ENCODE measurements at regions of chr19 and their contacts with region 1.

Region 1: GRCh38 chr19:46975925-46976782 is 43.5 kb upstream of the NPAS1 start:
- DNase-seq: peak; percentile 98 to 99
- ATAC-seq: peak; percentile 87 to 92 (median 88)
- H3K4me3 ChIP-seq: peak overlapping the region; percentile 30
- H3K27ac ChIP-seq: peak overlapping the region; percentile 91
- H3K4me1 ChIP-seq: peaks cover 87% of the 10 kb centered on the region
- H3K27me3 ChIP-seq: no peaks in the 10 kb centered on the region
- CTCF ChIP-seq: no peak

Region 2: DNA sequence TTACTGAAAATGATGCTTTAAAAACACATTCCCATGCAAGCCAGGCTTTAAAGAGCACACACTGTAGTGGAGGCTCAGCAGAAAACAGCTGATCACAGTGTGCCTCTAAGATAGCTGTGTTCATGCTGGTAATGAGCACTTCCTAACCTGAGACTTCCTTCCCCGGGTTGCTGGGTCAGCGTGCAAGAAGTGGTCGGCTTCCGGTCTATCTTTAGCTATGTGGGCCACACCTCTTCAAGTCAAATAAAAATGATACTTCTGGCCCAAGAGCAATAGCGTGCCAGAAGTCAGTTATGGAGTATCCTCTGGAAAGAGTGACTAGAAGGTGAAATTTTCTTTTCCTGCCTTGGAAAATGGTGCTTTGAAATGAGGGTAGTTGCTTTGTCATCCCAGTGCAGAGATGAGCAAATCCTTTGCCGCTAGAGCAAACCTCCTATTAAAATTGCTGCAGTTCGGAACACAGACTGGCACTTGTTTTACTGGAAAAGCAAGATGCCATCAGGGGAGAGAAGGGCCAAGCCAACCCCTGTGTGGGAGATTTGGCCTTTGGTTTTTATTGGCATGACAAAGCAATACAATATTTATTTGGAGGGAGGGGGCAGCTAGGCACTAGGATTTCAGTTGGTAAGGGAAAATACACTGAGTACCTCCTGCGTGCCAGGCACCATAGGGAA is 51.1 kb before region 1 on chr19:
- intact Hi-C with region 1: loop called (anchors 5 kb)
- DNase-seq: no peak
- ATAC-seq: peak in 3 of 4 donors; percentile 53 to 74 (median 73)
- H3K4me3 ChIP-seq: no peak overlapping the region
- H3K27ac ChIP-seq: peak overlapping the region; percentile 75
- H3K4me1 ChIP-seq: peaks cover 69% of the 10 kb centered on the region
- H3K27me3 ChIP-seq: no peaks in the 10 kb centered on the region
- CTCF ChIP-seq: no peak

Region 3: DNA sequence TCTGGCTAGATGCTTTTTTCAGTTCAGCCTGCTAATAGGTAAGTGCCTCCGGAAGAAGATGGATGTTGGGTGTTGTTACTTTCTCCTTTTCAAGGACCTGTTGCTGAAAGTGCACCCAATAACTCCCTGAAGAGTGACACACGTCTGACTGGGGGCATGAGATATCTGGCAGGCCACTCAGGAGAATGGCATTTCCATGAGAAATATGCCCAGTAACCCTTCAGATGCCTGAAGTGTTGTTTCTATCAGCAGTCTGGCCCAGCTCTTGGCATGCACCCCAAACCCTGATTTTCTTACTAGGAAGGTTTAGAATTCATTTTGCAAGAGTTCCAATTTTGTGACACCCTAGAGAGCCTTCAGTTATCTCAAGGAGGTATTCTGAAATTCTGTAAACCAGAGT is 43.8 kb before region 1 on chr19:
- intact Hi-C with region 1: loop called (anchors 5 kb)
- DNase-seq: no peak
- ATAC-seq: peak in 1 of 4 donors; percentile 25
- H3K4me3 ChIP-seq: no peak overlapping the region
- H3K27ac ChIP-seq: no peak overlapping the region
- H3K4me1 ChIP-seq: peaks cover 59% of the 10 kb centered on the region
- H3K27me3 ChIP-seq: no peaks in the 10 kb centered on the region
- CTCF ChIP-seq: no peak

Region 4: GRCh38 chr19:47019431-47020041 is 43.4 kb after region 1 on chr19 and contains the start of gene NPAS1:
- intact Hi-C with region 1: no loop called
- DNase-seq: no peak
- ATAC-seq: peak in 1 of 4 donors; percentile 31
- H3K4me3 ChIP-seq: peak within 1 kb of the TSS; percentile 56
- H3K27ac ChIP-seq: no peak within 1 kb of the TSS
- H3K4me1 ChIP-seq: peaks cover 23% of the 10 kb centered on the region
- H3K27me3 ChIP-seq: peaks cover 0 to 54% (median 35%) of the 10 kb centered on the region in 3 donors
- CTCF ChIP-seq: no peak
- total RNA-seq, gene NPAS1: 0.18 to 0.23 TPM in 2 of 4 donors, not detected in the others

Measured in psoas muscle (tissue), 8 donors.